ENCODE measurements at regions of chr5 and their contacts with region 1.

Region 1: DNA sequence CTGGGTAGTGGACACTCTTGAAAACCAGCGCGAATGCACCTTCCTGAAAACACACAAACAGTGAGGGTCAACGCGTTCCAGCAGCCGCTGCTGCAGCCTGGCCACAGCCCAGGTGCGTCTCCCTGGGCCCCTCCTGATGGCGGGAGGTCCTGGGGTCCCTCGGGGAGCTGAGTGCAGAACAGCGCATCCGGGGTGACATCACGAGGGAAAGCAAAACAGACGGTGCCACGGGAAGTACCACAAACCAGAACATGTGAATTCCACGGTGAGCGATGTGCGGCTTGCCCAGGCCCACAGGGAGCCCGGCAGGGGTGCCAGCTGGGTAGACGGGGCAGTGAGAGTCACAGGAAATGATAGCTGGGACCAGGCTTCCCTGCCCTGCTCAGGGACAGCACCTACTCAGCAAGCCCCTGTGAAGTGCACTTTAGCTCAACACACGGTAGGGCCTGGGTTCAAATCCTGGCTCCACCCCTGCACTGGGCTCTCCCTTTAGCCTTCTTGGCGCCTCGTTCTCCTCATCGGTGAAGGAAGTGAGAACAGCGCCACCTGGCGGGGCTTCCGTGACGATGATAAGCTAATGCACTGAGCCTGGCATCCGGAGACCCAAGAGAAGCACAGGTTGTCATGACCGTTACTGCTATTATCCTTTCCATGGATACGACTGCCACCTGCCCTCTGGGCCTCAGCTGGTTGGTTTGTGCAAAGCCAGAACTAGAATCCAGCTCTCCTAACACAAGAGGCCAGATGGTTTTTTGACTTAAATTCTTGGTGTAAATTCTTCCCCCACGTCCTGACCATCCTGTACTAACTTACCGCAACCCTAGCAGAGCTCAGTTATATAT is 24.6 kb downstream of the GFPT2 start:
- DNase-seq: peak; percentile 88
- H3K4me3 Mint-ChIP-seq: no peak overlapping the region
- H3K27ac Mint-ChIP-seq: no peak overlapping the region
- H3K4me1 Mint-ChIP-seq: no peaks in the 10 kb centered on the region
- H3K27me3 Mint-ChIP-seq: peaks cover 30% of the 10 kb centered on the region

Region 2: GRCh38 chr5:180161420-180162303 is 166.9 kb before region 1 on chr5:
- CTCF ChIA-PET with region 1: no interaction called
- DNase-seq: no peak
- H3K4me3 Mint-ChIP-seq: no peak overlapping the region
- H3K27ac Mint-ChIP-seq: no peak overlapping the region
- H3K4me1 Mint-ChIP-seq: no peaks in the 10 kb centered on the region
- H3K27me3 Mint-ChIP-seq: peaks cover 42% of the 10 kb centered on the region

Region 3: GRCh38 chr5:180201051-180201987 is 127.2 kb before region 1 on chr5:
- CTCF ChIA-PET with region 1: interaction called, 10 read pairs
- DNase-seq: peak; percentile 44
- H3K4me3 Mint-ChIP-seq: no peak overlapping the region
- H3K27ac Mint-ChIP-seq: no peak overlapping the region
- H3K4me1 Mint-ChIP-seq: no peaks in the 10 kb centered on the region
- H3K27me3 Mint-ChIP-seq: peaks cover 4% of the 10 kb centered on the region

Region 4: GRCh38 chr5:180291943-180292831 is 36.3 kb before region 1 on chr5 and contains the start of gene MAPK9:
- CTCF ChIA-PET with region 1: interaction called, 51 read pairs
- DNase-seq: peak; percentile 86
- H3K4me3 Mint-ChIP-seq: peak within 1 kb of the TSS; percentile 95
- H3K27ac Mint-ChIP-seq: peak within 1 kb of the TSS; percentile 99
- H3K4me1 Mint-ChIP-seq: peaks cover 42% of the 10 kb centered on the region
- H3K27me3 Mint-ChIP-seq: no peaks in the 10 kb centered on the region

Region 5: GRCh38 chr5:180315762-180316212 is 12.7 kb before region 1 on chr5:
- CTCF ChIA-PET with region 1: interaction called, 33 read pairs
- DNase-seq: peak; percentile 80
- H3K4me3 Mint-ChIP-seq: no peak overlapping the region
- H3K27ac Mint-ChIP-seq: no peak overlapping the region
- H3K4me1 Mint-ChIP-seq: peaks cover 15% of the 10 kb centered on the region
- H3K27me3 Mint-ChIP-seq: peaks cover 5% of the 10 kb centered on the region

Region 6: DNA sequence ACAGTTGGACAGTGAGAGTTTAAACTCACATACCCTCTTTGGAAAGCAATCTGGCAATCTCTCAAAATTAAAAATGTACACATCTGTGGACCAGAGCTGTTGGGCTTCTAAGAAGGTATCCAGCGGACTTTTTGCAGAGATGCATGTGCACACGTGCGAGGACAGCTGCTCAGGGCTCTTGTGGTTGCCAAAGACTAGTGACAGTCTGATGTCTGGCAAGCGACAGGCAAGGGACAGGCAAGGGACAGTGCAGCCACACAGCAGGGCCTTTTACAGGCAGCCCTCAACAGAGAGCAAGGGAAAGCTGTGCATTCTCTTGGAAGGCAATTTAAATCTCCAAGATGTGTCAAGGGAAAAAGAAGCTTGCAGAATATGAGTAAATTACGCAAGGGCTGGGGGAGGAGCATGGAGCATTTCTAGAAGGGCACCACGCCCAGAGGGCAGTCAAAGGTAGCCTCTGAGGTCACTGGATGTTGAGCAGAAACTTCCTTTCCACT is 15.4 kb after region 1 on chr5:
- CTCF ChIA-PET with region 1: interaction called, 18 read pairs
- DNase-seq: no peak
- H3K4me3 Mint-ChIP-seq: no peak overlapping the region
- H3K27ac Mint-ChIP-seq: no peak overlapping the region
- H3K4me1 Mint-ChIP-seq: no peaks in the 10 kb centered on the region
- H3K27me3 Mint-ChIP-seq: peaks cover 37% of the 10 kb centered on the region

Region 7: GRCh38 chr5:180591311-180591887 is 262.9 kb after region 1 on chr5 and contains the start of gene SCGB3A1:
- CTCF ChIA-PET with region 1: no interaction called
- DNase-seq: peak; percentile 13
- H3K4me3 Mint-ChIP-seq: no peak within 1 kb of the TSS
- H3K27ac Mint-ChIP-seq: peak within 1 kb of the TSS; percentile 21
- H3K4me1 Mint-ChIP-seq: peaks cover 11% of the 10 kb centered on the region
- H3K27me3 Mint-ChIP-seq: peaks cover 64% of the 10 kb centered on the region